Common myeloid progenitor, CD34-positive (primary cell): ENCODE measurements at regions of chr4 and their contacts with region 1.

Region 1: GRCh38 chr4:36244257-36245079 is at the start of gene ARAP2:
- DNase-seq: peak; percentile 68 to 89 (median 87)
- H3K4me3 ChIP-seq: peak within 1 kb of the TSS; percentile 79 to 98 (median 90)
- H3K27ac ChIP-seq: peak within 1 kb of the TSS; percentile 86 to 93
- H3K4me1 ChIP-seq: peaks cover 5 to 38% (median 29%) of the 10 kb centered on the region in 4 experiments
- H3K27me3 ChIP-seq: no peaks in the 10 kb centered on the region

Region 2: DNA sequence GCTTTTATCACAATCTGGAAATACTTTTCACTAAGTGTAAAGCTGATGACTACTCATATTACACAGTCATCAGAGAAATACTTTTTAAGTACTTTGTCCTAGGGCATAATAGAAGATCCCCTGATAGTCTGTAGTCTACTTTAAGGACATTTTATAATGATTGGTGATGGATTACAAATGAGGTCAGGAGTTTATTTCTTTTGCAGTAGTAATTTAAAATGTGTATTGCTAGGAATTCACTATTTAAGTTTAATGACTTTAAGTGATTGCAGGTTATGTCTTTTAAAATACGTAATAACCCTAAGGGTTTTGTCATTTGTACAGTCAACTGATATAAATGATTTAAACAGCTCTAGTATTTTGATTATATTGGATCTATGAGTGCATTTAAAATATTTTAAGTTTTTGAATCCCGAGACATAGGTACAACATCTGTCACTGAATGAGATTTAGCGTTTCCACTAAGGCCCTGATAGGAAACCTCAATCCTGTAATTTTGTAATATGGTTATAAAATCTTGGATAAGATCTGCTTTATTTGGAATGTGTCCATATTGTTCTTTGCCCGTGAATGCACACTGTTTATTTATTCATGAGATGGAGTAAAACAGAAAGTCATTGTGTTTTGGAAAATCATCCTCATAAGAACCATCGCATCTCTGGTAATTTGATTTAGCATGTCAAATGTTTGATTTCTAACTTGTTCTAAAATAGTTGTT is 189.6 kb before region 1 on chr4:
- CTCF ChIA-PET with region 1: no interaction called
- POLR2A ChIA-PET with region 1: no interaction called
- DNase-seq: no peak
- H3K4me3 ChIP-seq: no peak overlapping the region
- H3K27ac ChIP-seq: no peak overlapping the region
- H3K4me1 ChIP-seq: no peaks in the 10 kb centered on the region
- H3K27me3 ChIP-seq: no peaks in the 10 kb centered on the region

Region 3: GRCh38 chr4:36183232-36183631 is 61.2 kb before region 1 on chr4:
- CTCF ChIA-PET with region 1: no interaction called
- POLR2A ChIA-PET with region 1: no interaction called
- DNase-seq: no peak
- H3K4me3 ChIP-seq: no peak overlapping the region
- H3K27ac ChIP-seq: no peak overlapping the region
- H3K4me1 ChIP-seq: no peaks in the 10 kb centered on the region
- H3K27me3 ChIP-seq: no peaks in the 10 kb centered on the region

Region 4: DNA sequence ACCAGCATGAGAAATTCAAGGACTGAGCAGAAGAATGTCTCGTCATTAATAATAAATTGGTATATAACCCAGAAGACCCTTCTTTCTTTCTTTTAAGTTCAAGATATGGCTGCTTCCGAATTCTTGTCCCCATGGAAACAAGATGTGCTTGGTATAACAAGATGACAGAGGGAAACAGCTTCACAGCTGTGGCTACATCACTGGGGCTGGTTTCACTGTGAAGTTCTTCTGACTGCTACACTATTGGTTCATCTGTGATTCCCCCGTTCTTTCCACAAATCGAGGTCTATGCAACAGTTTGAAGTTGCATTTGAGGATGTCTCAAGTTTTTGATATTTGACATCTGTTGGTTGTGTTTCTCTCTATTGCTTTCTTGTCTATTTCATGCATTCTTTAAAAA is 24.6 kb after region 1 on chr4:
- CTCF ChIA-PET with region 1: interaction called, 12 read pairs
- POLR2A ChIA-PET with region 1: no interaction called
- DNase-seq: peak; percentile 21 to 82 (median 76)
- H3K4me3 ChIP-seq: no peak overlapping the region
- H3K27ac ChIP-seq: no peak overlapping the region
- H3K4me1 ChIP-seq: no peaks in the 10 kb centered on the region
- H3K27me3 ChIP-seq: no peaks in the 10 kb centered on the region